ENCODE measurements at regions of chr3 and their contacts with region 1.

Region 1: DNA sequence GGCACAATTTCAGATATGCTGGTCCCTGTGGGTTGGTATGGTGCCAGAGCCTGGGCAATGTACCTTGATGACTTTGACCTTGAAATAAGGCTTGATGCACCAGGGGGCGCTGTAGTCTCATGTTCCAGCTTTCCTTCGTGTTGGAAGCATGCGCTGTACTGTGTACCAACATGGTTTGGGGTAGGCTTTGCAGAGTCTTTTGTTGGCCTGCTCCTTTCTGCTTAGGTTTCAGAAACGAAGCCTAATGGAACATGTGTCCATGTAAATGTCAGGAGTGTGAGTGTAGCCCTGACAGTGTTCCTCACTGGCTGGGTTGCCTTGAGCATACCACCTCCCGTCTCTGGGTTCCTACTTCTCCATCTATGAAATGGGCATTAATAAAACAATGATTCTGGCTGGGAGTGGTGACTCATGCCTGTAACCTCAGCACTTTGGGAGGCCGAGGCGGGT is 3.6 kb upstream of the CCR4 start:
- DNase-seq: peak; percentile 82 to 96 (median 87)
- ATAC-seq: peak; percentile 79
- H3K4me3 ChIP-seq: no peak overlapping the region
- H3K4me3 Mint-ChIP-seq: no peak overlapping the region
- H3K27ac ChIP-seq: no peak overlapping the region
- H3K27ac Mint-ChIP-seq: no peak overlapping the region
- H3K4me1 ChIP-seq: peaks cover 4% of the 10 kb centered on the region
- H3K4me1 Mint-ChIP-seq: peaks cover 16% of the 10 kb centered on the region
- H3K27me3 ChIP-seq: no peaks in the 10 kb centered on the region
- H3K27me3 Mint-ChIP-seq: no peaks in the 10 kb centered on the region
- CTCF ChIP-seq: peak; percentile 78

Region 2: GRCh38 chr3:32004113-32004765 is 943.6 kb before region 1 on chr3:
- CTCF ChIA-PET with region 1: no interaction called
- POLR2A ChIA-PET with region 1: no interaction called
- intact Hi-C with region 1: no loop called
- DNase-seq: no peak
- ATAC-seq: no peak
- H3K4me3 ChIP-seq: no peak overlapping the region
- H3K4me3 Mint-ChIP-seq: no peak overlapping the region
- H3K27ac ChIP-seq: no peak overlapping the region
- H3K27ac Mint-ChIP-seq: no peak overlapping the region
- H3K4me1 ChIP-seq: no peaks in the 10 kb centered on the region
- H3K4me1 Mint-ChIP-seq: no peaks in the 10 kb centered on the region
- H3K27me3 ChIP-seq: peaks cover 0 to 4% of the 10 kb centered on the region in 2 experiments
- H3K27me3 Mint-ChIP-seq: peaks cover 17% of the 10 kb centered on the region
- CTCF ChIP-seq: no peak

Region 3: DNA sequence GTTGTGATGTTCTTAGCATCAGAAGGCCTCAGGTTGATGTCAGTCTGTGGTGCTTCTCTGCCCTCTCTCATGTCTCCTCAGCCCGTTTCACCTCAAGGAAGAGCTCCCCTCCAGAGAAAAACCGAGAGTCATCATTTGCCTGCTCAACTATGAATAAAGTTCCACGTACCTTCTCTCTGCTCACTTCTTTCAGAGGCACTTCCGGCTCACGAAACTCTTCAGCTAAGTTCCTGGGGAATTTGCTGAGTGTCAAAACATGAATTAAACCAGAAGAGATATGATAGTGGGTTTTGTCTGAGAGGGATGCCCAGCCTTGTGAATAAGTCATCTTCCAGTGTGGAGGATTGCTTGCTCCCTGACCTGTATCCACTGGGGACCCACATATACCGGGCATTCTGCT is 41.4 kb after region 1 on chr3:
- CTCF ChIA-PET with region 1: interaction called, 3 read pairs
- POLR2A ChIA-PET with region 1: no interaction called
- intact Hi-C with region 1: loop called in 1 of 2 experiments (anchors 5 kb)
- DNase-seq: no peak
- ATAC-seq: no peak
- H3K4me3 ChIP-seq: no peak overlapping the region
- H3K4me3 Mint-ChIP-seq: no peak overlapping the region
- H3K27ac ChIP-seq: no peak overlapping the region
- H3K27ac Mint-ChIP-seq: no peak overlapping the region
- H3K4me1 ChIP-seq: no peaks in the 10 kb centered on the region
- H3K4me1 Mint-ChIP-seq: peaks cover 11% of the 10 kb centered on the region
- H3K27me3 ChIP-seq: no peaks in the 10 kb centered on the region
- H3K27me3 Mint-ChIP-seq: no peaks in the 10 kb centered on the region
- CTCF ChIP-seq: no peak

Region 4: DNA sequence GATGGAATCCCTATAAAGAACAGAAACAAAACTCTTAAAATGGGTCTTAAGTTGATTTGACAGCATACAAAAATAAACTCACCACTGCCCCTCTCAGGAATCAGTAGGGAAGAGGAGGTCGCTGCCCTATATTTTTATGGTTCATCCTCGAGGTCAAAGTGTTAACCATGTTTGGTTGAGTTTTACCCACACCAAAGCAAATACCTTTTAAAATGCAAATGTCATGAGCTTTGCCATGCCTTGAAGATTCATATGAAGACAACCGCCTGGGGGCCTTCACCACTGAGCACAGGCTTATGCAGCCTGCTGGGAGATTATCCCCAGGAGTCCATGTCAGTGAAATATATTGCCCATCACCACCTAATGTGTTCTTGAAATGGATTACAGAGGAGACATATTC is 83.0 kb after region 1 on chr3:
- CTCF ChIA-PET with region 1: interaction called, 24 read pairs
- POLR2A ChIA-PET with region 1: interaction called, 5 read pairs
- intact Hi-C with region 1: no loop called
- DNase-seq: peak in 3 of 9 experiments; percentile 33 to 70 (median 61)
- ATAC-seq: peak; percentile 85
- H3K4me3 ChIP-seq: no peak overlapping the region
- H3K4me3 Mint-ChIP-seq: no peak overlapping the region
- H3K27ac ChIP-seq: no peak overlapping the region
- H3K27ac Mint-ChIP-seq: no peak overlapping the region
- H3K4me1 ChIP-seq: no peaks in the 10 kb centered on the region
- H3K4me1 Mint-ChIP-seq: peaks cover 11% of the 10 kb centered on the region
- H3K27me3 ChIP-seq: no peaks in the 10 kb centered on the region
- H3K27me3 Mint-ChIP-seq: no peaks in the 10 kb centered on the region
- CTCF ChIP-seq: no peak

Region 5: GRCh38 chr3:33063651-33064051 is 115.8 kb after region 1 on chr3:
- CTCF ChIA-PET with region 1: interaction called, 272 read pairs
- POLR2A ChIA-PET with region 1: no interaction called
- intact Hi-C with region 1: loop called in 1 of 2 experiments (anchors 1 kb)
- DNase-seq: peak in 8 of 9 experiments; percentile 24 to 62 (median 43)
- ATAC-seq: peak; percentile 56
- H3K4me3 ChIP-seq: no peak overlapping the region
- H3K4me3 Mint-ChIP-seq: peak overlapping the region; percentile 1
- H3K27ac ChIP-seq: peak overlapping the region in 1 of 2 experiments; percentile 54
- H3K27ac Mint-ChIP-seq: peak overlapping the region; percentile 77
- H3K4me1 ChIP-seq: peaks cover 20% of the 10 kb centered on the region
- H3K4me1 Mint-ChIP-seq: peaks cover 43% of the 10 kb centered on the region
- H3K27me3 ChIP-seq: no peaks in the 10 kb centered on the region
- H3K27me3 Mint-ChIP-seq: no peaks in the 10 kb centered on the region
- CTCF ChIP-seq: no peak

Region 6: GRCh38 chr3:33372218-33373081 is 424.6 kb after region 1 on chr3:
- CTCF ChIA-PET with region 1: interaction called, 36 read pairs
- POLR2A ChIA-PET with region 1: no interaction called
- intact Hi-C with region 1: loop called (anchors 1 kb)
- DNase-seq: peak in 8 of 9 experiments; percentile 25 to 60 (median 43)
- ATAC-seq: peak; percentile 62
- H3K4me3 ChIP-seq: no peak overlapping the region
- H3K4me3 Mint-ChIP-seq: no peak overlapping the region
- H3K27ac ChIP-seq: no peak overlapping the region
- H3K27ac Mint-ChIP-seq: no peak overlapping the region
- H3K4me1 ChIP-seq: no peaks in the 10 kb centered on the region
- H3K4me1 Mint-ChIP-seq: peaks cover 3% of the 10 kb centered on the region
- H3K27me3 ChIP-seq: peaks cover 0 to 4% of the 10 kb centered on the region in 2 experiments
- H3K27me3 Mint-ChIP-seq: peaks cover 16% of the 10 kb centered on the region
- CTCF ChIP-seq: peak; percentile 98

Region 7: GRCh38 chr3:34248352-34248751 is 1300.5 kb after region 1 on chr3:
- CTCF ChIA-PET with region 1: no interaction called
- POLR2A ChIA-PET with region 1: no interaction called
- intact Hi-C with region 1: no loop called
- DNase-seq: peak in 2 of 9 experiments; percentile 6 to 13
- ATAC-seq: no peak
- H3K4me3 ChIP-seq: no peak overlapping the region
- H3K4me3 Mint-ChIP-seq: no peak overlapping the region
- H3K27ac ChIP-seq: no peak overlapping the region
- H3K27ac Mint-ChIP-seq: no peak overlapping the region
- H3K4me1 ChIP-seq: no peaks in the 10 kb centered on the region
- H3K4me1 Mint-ChIP-seq: peaks cover 12% of the 10 kb centered on the region
- H3K27me3 ChIP-seq: no peaks in the 10 kb centered on the region
- H3K27me3 Mint-ChIP-seq: no peaks in the 10 kb centered on the region
- CTCF ChIP-seq: no peak

Measured in CD8-positive, alpha-beta T cell (primary cell).